Activated CD4-positive, alpha-beta T cell treated with anti-CD3 and anti-CD28 coated beads, Interleukin-2, amount 10 ng/mL, durations not matched to agents 24 days and 14 days (primary cell): ENCODE measurements at regions of chr1 and their contacts with region 1.

Region 1: GRCh38 chr1:40802078-40802741 is 18.6 kb downstream of the KCNQ4 start:
- DNase-seq: peak; percentile 96
- H3K4me3 Mint-ChIP-seq: peak overlapping the region; percentile 64
- H3K27ac Mint-ChIP-seq: peak overlapping the region; percentile 40
- H3K4me1 Mint-ChIP-seq: peaks cover 30% of the 10 kb centered on the region
- H3K27me3 Mint-ChIP-seq: peaks cover 2% of the 10 kb centered on the region

Region 2: DNA sequence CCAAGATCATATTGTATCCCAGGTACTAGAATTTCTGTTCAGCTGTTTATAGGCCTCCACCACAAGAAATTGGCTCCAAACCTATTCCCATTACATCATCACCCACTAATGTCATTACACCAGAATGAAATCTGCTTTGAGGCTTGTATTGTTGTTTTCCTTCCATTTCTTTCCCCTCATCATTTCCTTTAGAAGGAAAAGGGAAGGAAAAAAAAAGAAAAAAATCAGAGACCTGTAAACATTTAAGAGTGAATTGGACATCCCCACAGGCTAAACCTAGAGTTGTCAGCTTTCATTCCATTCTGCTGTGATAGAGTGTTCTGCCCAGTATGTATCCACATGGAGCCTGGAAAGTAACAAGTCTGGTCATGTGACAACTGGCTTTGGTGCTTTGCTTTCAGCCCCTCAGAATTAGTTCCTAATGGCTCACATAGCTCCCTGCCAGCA is 66.1 kb before region 1 on chr1:
- intact Hi-C with region 1: no loop called
- DNase-seq: no peak
- H3K4me3 Mint-ChIP-seq: no peak overlapping the region
- H3K27ac Mint-ChIP-seq: no peak overlapping the region
- H3K4me1 Mint-ChIP-seq: peaks cover 29% of the 10 kb centered on the region
- H3K27me3 Mint-ChIP-seq: no peaks in the 10 kb centered on the region

Region 3: GRCh38 chr1:40818264-40818961 is 16.2 kb after region 1 on chr1:
- intact Hi-C with region 1: loop called (anchors 1 kb)
- DNase-seq: peak; percentile 97
- H3K4me3 Mint-ChIP-seq: peak overlapping the region; percentile 83
- H3K27ac Mint-ChIP-seq: peak overlapping the region; percentile 61
- H3K4me1 Mint-ChIP-seq: peaks cover 8% of the 10 kb centered on the region
- H3K27me3 Mint-ChIP-seq: peaks cover 2% of the 10 kb centered on the region

Region 4: GRCh38 chr1:40862008-40862863 is 60.0 kb after region 1 on chr1 and contains the start of gene CITED4:
- intact Hi-C with region 1: loop called (anchors 5 kb)
- DNase-seq: peak; percentile 99
- H3K4me3 Mint-ChIP-seq: peak within 1 kb of the TSS; percentile 97
- H3K27ac Mint-ChIP-seq: peak within 1 kb of the TSS; percentile 99
- H3K4me1 Mint-ChIP-seq: peaks cover 16% of the 10 kb centered on the region
- H3K27me3 Mint-ChIP-seq: peaks cover 26% of the 10 kb centered on the region
- total RNA-seq, gene CITED4: 5.5 and 6.0 TPM in 2 replicates

Region 5: DNA sequence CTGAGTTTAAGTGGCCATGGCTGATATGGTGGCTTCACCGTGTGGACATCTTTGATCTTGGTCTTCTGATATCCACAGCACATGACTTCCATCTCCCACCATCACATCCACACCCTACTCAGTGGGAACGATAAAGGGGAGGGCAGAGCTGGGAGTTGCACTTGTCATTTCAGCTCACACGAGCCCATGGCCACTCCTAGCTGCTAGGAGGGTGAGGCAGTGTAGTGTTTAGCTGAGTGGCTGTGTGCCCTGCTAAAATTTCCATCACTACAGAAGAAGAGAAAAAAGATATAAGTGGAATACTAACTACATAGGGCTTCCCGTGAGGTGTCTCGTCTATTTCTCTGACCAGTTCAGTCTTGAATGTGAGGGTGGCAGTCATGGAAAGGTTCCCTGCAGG is 805.6 kb after region 1 on chr1:
- intact Hi-C with region 1: no loop called
- DNase-seq: no peak
- H3K4me3 Mint-ChIP-seq: no peak overlapping the region
- H3K27ac Mint-ChIP-seq: peak overlapping the region; percentile 88
- H3K4me1 Mint-ChIP-seq: peaks cover 47% of the 10 kb centered on the region
- H3K27me3 Mint-ChIP-seq: no peaks in the 10 kb centered on the region